Heart right ventricle (tissue), 16 donors: ENCODE measurements at regions of chr4 and their contacts with region 1.

Region 1: DNA sequence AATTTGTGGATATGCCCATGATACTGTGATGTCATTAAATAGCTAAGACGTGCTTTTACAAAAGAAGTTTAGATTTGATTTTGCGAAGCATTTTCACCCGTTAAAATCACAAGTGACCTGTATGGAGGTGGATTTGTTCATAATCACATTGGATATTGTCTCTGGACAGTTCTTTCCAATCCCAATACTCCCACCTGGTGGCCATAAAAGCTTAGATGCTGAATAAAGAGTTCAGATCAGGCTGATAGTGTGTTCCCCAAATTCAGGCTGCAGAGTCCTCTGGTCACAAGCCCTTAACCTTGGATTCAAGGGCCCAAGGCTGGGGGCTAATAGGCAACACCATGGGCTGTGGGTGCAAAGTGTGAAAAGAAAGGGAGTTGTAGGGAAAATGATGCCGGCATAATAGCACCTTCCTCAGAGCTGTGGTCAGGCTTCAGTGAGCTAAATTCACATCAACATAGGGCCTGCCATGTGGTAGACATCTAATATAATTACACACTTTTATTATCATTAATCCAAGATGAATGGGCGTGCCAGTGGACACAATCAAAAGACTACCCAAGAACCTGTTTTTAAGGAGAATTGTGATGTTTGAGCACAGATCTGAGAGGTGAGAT is 28.1 kb downstream of the SMIM43 start:
- DNase-seq: peak in 1 of 2 donors; percentile 29
- ATAC-seq: peak in 3 of 8 donors; percentile 8 to 37 (median 34)
- H3K4me3 ChIP-seq: no peak overlapping the region
- H3K27ac ChIP-seq: no peak overlapping the region
- H3K4me1 ChIP-seq: peaks cover 0 to 27% (median 4%) of the 10 kb centered on the region in 9 donors
- H3K27me3 ChIP-seq: peaks cover 0 to 10% (median 3%) of the 10 kb centered on the region in 7 donors
- CTCF ChIP-seq: peak in 8 of 9 donors; percentile 14 to 61 (median 50)

Region 2: DNA sequence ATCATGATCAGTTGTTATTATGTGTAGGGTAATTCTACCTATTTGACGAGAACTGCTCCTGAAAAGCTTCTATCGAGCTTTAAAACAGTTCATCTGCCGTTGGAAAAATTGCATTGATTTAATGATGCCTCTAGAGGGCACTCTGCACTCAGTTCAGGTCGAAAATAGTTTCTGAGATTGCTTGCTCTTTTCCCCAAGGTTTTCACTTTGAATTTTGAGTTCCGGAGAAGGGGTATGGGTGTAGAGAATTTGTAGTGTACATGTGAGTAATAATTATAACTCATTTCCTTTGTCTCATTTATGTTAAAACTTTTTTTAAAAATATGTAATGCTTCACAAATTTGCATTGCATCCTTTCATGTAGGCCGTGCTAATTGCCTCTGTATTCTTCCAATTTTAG is 544.4 kb before region 1 on chr4:
- intact Hi-C with region 1: loop called in 1 of 10 experiments (anchors 10 kb)
- DNase-seq: no peak
- ATAC-seq: no peak
- H3K4me3 ChIP-seq: peak overlapping the region in 1 of 10 donors; percentile 1
- H3K27ac ChIP-seq: no peak overlapping the region
- H3K4me1 ChIP-seq: peaks cover 0 to 8% (median 0%) of the 10 kb centered on the region in 9 donors
- H3K27me3 ChIP-seq: peaks cover 0 to 12% (median 0%) of the 10 kb centered on the region in 7 donors
- CTCF ChIP-seq: peak; percentile 32 to 82 (median 75)

Region 3: DNA sequence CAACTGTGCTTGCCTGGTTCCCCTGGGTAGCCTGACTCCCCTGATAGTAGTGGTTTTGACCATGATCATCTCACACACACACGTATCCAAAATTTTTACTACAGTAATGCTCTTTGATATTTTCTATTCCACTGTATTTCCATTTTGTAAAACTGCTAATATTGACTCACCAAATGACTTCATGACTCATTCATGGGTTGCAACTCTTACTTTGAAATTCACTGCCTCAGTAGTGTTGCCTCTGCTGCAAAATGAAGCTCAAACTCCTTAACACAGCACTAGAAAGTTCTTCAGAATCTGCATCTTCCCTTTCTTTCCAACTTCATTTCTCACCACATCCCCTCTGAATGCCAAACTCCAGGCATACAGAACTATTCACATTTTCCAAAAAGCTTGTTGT is 376.3 kb before region 1 on chr4:
- intact Hi-C with region 1: loop called in 1 of 10 experiments (anchors 10 kb)
- DNase-seq: no peak
- ATAC-seq: no peak
- H3K4me3 ChIP-seq: no peak overlapping the region
- H3K27ac ChIP-seq: no peak overlapping the region
- H3K4me1 ChIP-seq: peaks cover 0 to 7% (median 0%) of the 10 kb centered on the region in 9 donors
- H3K27me3 ChIP-seq: no peaks in the 10 kb centered on the region
- CTCF ChIP-seq: no peak

Region 4: GRCh38 chr4:121370729-121371325 is 366.0 kb before region 1 on chr4:
- intact Hi-C with region 1: loop called in 7 of 10 experiments (anchors 5 to 10 kb)
- DNase-seq: peak in 1 of 2 donors; percentile 55
- ATAC-seq: peak in 4 of 8 donors; percentile 45 to 72 (median 58)
- H3K4me3 ChIP-seq: no peak overlapping the region
- H3K27ac ChIP-seq: no peak overlapping the region
- H3K4me1 ChIP-seq: peaks cover 0 to 11% (median 0%) of the 10 kb centered on the region in 9 donors
- H3K27me3 ChIP-seq: no peaks in the 10 kb centered on the region
- CTCF ChIP-seq: peak; percentile 39 to 81 (median 74)

Region 5: DNA sequence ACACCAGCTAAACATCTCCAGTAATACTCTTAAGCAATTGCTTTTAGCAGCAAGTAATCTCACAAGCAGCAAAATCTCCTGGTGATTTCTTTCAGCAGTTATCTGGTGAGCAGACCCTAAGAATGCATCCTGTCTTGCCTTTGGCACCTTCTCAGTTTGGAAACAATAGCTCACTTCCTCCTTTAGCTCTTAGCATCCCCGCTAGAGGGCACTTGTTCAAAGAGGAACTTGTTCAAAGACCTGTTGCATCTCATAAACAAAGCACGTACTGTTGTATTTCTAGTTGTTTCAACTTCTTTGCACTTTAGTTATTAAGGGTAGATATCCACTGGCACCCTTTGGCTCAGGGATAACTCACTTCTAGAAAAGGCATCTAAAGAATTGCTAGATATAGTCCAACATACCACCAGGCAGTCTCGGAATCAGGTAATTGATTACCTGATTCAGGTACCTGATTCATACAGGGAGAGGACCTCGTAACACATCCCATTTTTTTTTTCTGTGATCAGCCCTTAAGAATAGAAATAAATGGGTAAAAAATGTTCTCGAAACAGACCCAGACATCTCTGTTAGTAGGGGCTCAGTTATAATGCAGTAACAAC is 274.1 kb before region 1 on chr4:
- intact Hi-C with region 1: loop called in 3 of 10 experiments (anchors 10 kb)
- DNase-seq: peak in 1 of 2 donors; percentile 70
- ATAC-seq: peak; percentile 41 to 94 (median 77)
- H3K4me3 ChIP-seq: no peak overlapping the region
- H3K27ac ChIP-seq: peak overlapping the region in 1 of 10 donors; percentile 13
- H3K4me1 ChIP-seq: peaks cover 0 to 9% (median 4%) of the 10 kb centered on the region in 9 donors
- H3K27me3 ChIP-seq: no peaks in the 10 kb centered on the region
- CTCF ChIP-seq: peak; percentile 43 to 80 (median 72)